Activated T-helper 2 cell treated with anti-CD3 and anti-CD28 coated beads, Interferon-gamma antibody, Interleukin-2, Interleukin-4, amounts not matched to agents 10 μg/mL and 5 μg/mL and 100 μg/mL, durations not matched to agents 14 hours and 24 hours and 36 hours (primary cell): ENCODE measurements at regions of chr6 and their contacts with region 1.

Region 1: DNA sequence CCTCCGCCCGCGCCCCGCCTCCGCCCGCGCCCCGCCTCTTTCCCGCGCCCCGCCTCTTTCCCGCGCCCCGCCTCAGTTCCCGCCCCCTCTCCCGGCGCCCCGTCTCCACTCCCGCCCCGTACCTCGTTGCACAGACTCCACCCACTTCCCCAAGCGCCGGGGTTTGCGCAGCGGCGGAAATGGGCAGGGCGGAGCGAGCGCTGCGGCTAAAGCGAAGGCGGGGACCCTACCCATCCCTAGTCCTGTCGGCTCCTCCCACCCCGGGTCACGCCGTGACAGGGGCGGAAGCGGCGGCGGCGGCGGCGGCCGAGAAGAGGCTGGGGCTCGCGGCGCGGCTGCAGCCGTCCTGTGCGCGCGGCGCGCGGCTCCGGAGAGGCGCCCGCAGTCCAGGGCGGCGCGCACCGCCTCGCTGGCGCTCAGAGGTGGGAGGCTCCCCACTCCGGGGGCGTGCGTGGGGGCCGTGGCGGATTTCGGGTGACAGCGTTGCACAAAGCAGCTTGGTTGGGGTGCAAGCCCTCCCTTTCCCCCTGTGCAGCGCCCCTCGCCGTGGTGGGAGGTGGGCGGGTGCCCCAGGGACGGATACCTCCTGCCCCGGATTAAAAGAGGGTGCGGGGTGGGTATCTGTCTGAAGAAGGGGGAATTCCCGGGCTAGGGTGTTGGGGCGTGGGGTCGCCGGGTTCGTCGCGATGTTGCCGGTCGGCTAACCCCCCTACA is at the start of gene KDM1B:
- DNase-seq: peak; percentile 98
- H3K4me3 Mint-ChIP-seq: peak within 1 kb of the TSS; percentile 96
- H3K27ac Mint-ChIP-seq: peak within 1 kb of the TSS; percentile 90
- H3K4me1 Mint-ChIP-seq: peaks cover 25% of the 10 kb centered on the region
- H3K27me3 Mint-ChIP-seq: no peaks in the 10 kb centered on the region
- total RNA-seq, gene KDM1B: 9.7 and 9.9 TPM in 2 replicates

Region 2: GRCh38 chr6:17599885-17600526 is 555.3 kb before region 1 on chr6 and contains the start of gene FAM8A1:
- intact Hi-C with region 1: loop called (anchors 5 kb)
- DNase-seq: peak; percentile 92
- H3K4me3 Mint-ChIP-seq: peak within 1 kb of the TSS; percentile 89
- H3K27ac Mint-ChIP-seq: peak within 1 kb of the TSS; percentile 86
- H3K4me1 Mint-ChIP-seq: peaks cover 24% of the 10 kb centered on the region
- H3K27me3 Mint-ChIP-seq: no peaks in the 10 kb centered on the region
- total RNA-seq, gene FAM8A1: 4.8 and 4.9 TPM in 2 replicates

Region 3: GRCh38 chr6:18115356-18115755 is 40.0 kb before region 1 on chr6:
- intact Hi-C with region 1: loop called (anchors 2 kb)
- DNase-seq: peak; percentile 12
- H3K4me3 Mint-ChIP-seq: no peak overlapping the region
- H3K27ac Mint-ChIP-seq: peak overlapping the region; percentile 24
- H3K4me1 Mint-ChIP-seq: peaks cover 12% of the 10 kb centered on the region
- H3K27me3 Mint-ChIP-seq: peaks cover 60% of the 10 kb centered on the region

Region 4: DNA sequence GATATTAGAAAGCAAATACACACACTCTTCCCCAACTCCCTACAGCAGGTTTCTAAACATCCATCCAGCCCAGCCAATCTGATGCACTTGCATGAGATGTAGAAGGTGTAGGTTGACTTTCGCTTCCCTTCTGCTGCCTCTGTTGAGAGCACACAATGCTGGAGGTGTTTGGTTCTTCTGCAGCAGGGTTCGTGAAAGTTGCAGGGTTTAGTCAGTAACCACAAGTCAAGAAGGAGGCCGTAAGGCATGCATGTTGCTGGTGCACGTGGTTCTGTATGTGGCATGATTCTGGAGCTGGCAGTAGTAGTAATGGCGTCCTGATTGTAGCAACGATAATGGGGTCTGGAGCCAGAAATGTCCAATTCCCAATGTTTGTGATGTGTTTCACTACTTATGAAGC is 56.0 kb after region 1 on chr6:
- intact Hi-C with region 1: loop called (anchors 10 kb)
- DNase-seq: peak; percentile 11
- H3K4me3 Mint-ChIP-seq: no peak overlapping the region
- H3K27ac Mint-ChIP-seq: peak overlapping the region; percentile 2
- H3K4me1 Mint-ChIP-seq: peaks cover 20% of the 10 kb centered on the region
- H3K27me3 Mint-ChIP-seq: no peaks in the 10 kb centered on the region

Region 5: GRCh38 chr6:18264219-18264922 is 109.1 kb after region 1 on chr6 and contains the start of gene DEK:
- intact Hi-C with region 1: loop called (anchors 1 kb)
- DNase-seq: peak; percentile 82
- H3K4me3 Mint-ChIP-seq: peak within 1 kb of the TSS; percentile 98
- H3K27ac Mint-ChIP-seq: peak within 1 kb of the TSS; percentile 97
- H3K4me1 Mint-ChIP-seq: peaks cover 40% of the 10 kb centered on the region
- H3K27me3 Mint-ChIP-seq: no peaks in the 10 kb centered on the region
- total RNA-seq, gene DEK: 182 and 198 TPM in 2 replicates